MCF 10A (cell line): ENCODE measurements at regions of chr9 and their contacts with region 1.

Region 1: DNA sequence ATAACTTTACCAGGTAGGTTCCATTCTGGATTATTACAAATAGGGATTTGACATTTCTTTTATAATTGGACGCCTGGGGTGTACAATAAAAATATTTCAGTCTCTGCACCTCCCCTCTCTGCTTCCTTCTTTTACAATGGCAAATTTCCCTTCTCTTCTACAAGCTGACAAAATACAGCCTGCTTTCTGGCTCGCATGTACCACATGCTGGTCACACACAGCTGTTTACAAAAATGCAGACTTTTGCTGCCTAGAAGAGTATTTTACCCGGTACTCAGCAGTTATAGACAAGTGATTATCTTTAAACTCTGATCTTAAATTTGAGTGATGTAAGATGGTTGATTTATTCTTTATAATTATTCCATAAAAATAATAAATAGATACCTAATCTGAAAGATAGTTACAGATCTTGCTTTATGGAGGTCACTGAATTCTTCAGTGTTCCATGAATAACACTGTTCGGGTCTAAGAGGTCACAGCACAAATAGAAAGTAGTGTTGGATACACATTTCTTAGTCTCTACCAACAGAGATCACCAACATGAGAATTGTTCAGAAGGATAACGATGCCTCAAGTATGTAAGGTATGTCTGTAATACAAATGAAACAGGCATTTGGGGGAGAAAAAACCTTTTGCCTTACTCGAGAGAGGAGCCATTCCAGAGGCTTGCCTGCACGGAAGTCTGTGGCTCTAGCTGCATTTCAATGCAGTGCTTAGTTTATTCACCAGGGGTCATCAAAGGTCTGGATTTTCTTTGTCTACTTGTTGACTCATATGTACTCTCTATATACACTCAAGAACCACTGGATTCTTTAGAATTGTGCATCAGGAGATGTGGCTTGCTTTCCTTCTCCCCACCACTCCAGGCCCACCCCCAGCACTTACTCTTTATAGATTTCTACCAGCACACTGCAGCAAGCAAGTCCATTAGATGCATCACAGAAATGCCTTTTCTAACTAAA is 206.6 kb upstream of the RFX3 start:
- DNase-seq: peak; percentile 84
- H3K4me3 Mint-ChIP-seq: no peak overlapping the region
- H3K27ac Mint-ChIP-seq: no peak overlapping the region
- H3K4me1 Mint-ChIP-seq: peaks cover 10% of the 10 kb centered on the region
- H3K27me3 Mint-ChIP-seq: no peaks in the 10 kb centered on the region
- CTCF ChIP-seq: peak; percentile 64

Region 2: DNA sequence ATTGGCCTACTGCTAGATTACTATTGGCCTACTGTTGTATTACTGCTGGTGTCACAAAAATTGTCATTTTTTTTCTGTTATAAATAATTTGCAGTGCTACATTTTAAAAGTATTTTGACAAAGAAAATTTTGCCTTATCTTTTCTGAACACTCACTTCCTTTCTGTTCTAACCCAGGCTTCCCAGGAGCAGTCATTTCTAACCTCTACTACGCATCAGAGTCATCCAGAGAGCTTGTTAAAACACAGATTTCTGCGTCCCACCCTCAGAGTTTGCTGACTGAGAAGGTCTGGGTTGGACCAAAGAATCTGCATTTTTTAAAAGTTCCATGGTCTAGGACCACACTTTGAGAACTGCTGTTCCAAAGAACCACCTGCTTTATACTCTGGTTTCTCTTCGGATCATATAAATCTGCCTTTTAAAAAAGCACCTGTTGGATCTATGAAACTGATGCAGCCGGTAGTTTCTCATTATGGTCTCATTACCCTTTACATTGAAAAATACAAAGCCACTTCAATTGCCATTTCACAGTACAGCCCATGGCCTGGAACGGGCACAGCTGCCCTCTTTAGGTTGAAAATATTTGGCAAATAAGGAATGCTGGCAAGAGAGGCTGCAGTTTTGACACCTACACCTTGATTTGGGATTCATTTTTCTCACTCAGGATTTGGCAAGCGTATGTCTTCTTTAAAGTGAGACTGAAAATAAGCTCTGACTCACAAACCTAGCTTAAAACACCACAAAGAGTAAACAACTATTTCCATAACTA is 261.6 kb after region 1 on chr9:
- CTCF ChIA-PET with region 1: no interaction called
- POLR2A ChIA-PET with region 1: no interaction called
- intact Hi-C with region 1: loop called (anchors 2 kb)
- DNase-seq: peak; percentile 13
- H3K4me3 Mint-ChIP-seq: no peak overlapping the region
- H3K27ac Mint-ChIP-seq: no peak overlapping the region
- H3K4me1 Mint-ChIP-seq: no peaks in the 10 kb centered on the region
- H3K27me3 Mint-ChIP-seq: no peaks in the 10 kb centered on the region
- CTCF ChIP-seq: no peak

Region 3: DNA sequence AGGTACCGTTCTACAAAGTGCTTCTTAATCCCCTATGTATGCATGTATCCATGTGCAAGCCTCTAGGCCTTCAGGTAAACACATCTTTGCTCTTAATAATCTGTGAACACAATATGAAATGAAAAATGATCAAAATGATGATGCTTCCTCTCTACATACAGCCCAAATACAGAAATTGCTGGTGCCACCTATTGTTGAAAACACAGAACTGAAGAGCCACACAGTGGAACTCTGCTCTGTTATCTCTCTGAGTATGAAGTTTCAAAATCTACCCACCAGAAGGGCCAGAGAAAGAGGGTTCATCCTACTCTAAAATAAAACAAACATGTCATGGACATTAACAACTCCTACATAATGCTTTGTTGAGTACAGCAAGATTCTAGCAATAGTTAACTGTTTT is 496.2 kb after region 1 on chr9:
- CTCF ChIA-PET with region 1: interaction called, 75 read pairs
- POLR2A ChIA-PET with region 1: no interaction called
- intact Hi-C with region 1: loop called (anchors 1 kb)
- DNase-seq: peak; percentile 48
- H3K4me3 Mint-ChIP-seq: no peak overlapping the region
- H3K27ac Mint-ChIP-seq: peak overlapping the region; percentile 76
- H3K4me1 Mint-ChIP-seq: no peaks in the 10 kb centered on the region
- H3K27me3 Mint-ChIP-seq: no peaks in the 10 kb centered on the region
- CTCF ChIP-seq: peak; percentile 62

Region 4: DNA sequence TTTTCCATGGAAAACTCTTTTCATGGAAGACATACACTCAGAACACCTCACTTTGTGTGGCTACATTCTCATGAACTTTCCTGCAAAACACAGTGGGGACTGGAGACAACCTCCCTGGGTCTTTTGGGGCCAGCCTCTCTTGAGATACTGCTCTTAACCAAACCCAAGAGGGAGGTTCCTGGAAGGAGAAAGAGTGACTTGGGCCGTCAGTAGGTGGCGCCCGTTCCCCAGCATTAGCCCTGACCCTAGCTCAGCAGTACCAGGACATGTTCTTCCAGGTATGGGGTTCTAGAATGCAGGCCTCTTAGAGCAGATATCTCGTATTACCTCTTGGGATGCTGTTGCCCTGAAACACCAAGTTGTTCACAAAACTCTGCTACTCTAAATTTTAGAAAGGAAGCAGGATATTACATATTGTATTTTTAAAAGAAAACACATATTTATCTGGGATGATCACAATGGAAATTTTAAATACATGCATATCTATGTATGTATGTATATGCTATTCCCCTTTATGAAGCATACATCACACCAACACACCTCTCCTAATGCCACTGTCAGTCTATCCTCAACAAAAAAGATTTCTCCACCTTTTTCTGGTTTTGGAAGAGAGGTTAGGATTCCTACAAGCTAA is 583.3 kb after region 1 on chr9:
- CTCF ChIA-PET with region 1: interaction called, 27 read pairs
- POLR2A ChIA-PET with region 1: interaction called, 4 read pairs
- intact Hi-C with region 1: loop called (anchors 1 kb)
- DNase-seq: peak; percentile 79
- H3K4me3 Mint-ChIP-seq: no peak overlapping the region
- H3K27ac Mint-ChIP-seq: no peak overlapping the region
- H3K4me1 Mint-ChIP-seq: no peaks in the 10 kb centered on the region
- H3K27me3 Mint-ChIP-seq: no peaks in the 10 kb centered on the region
- CTCF ChIP-seq: peak; percentile 81

Region 5: DNA sequence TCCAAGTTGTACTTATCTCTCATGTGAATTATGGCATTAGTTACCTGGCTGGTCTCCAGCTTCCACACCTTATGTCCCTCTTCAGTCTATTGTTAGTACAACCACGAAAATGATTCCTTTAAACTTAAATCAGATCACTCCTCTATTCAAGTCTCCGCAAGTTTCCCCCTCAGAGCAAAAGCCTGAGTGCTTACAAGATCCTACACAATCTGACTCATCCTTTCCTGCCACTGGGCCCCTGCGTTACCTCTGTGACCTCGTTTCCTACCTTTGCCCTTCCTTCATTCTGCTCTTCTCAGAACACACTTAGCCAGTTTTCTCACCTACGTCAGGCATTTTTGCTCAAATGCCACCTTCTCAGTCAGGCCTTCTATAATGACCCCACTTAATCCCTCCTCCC is 612.6 kb after region 1 on chr9:
- CTCF ChIA-PET with region 1: interaction called, 40 read pairs
- POLR2A ChIA-PET with region 1: interaction called, 7 read pairs
- intact Hi-C with region 1: no loop called
- DNase-seq: peak; percentile 78
- H3K4me3 Mint-ChIP-seq: no peak overlapping the region
- H3K27ac Mint-ChIP-seq: peak overlapping the region; percentile 3
- H3K4me1 Mint-ChIP-seq: peaks cover 11% of the 10 kb centered on the region
- H3K27me3 Mint-ChIP-seq: no peaks in the 10 kb centered on the region
- CTCF ChIP-seq: no peak

Region 6: DNA sequence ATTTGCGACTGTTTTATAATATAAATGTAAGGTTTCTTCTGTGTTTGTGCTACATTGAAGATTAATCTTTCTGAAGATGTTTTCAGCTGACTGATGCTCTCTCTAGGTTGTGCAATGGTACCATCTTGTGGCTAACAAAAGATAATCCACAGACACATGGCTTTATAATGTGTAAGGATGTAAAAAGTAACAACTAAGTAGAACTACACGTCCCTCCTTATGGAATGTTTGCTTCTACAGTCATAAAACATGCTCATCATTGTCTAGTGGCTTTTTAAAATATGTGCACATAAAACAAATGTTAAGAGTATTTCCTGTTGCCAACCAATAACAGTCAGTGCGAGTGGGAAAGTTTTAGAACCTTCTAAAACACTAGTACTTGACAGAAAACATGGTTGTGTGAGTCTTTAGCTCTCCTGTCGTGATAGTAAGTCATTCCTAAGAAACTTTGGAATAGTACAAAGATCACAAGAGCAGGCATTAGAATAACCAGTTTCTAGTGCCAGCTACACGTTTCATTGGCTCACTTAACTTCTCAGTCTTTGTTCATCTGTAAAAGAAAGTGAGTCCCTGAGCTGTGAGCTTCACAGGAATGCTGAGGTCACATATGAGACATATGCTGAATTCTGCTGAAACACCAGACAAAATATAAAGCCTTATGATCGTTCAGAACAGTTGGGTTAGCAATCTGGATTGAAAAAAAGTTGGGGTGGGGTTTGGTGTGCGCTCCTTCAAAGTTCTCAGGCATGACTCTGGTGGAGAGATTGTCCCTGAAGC is 643.3 kb after region 1 on chr9:
- CTCF ChIA-PET with region 1: interaction called, 9 read pairs
- POLR2A ChIA-PET with region 1: no interaction called
- intact Hi-C with region 1: loop called (anchors 1 kb)
- DNase-seq: peak; percentile 50
- H3K4me3 Mint-ChIP-seq: no peak overlapping the region
- H3K27ac Mint-ChIP-seq: no peak overlapping the region
- H3K4me1 Mint-ChIP-seq: peaks cover 11% of the 10 kb centered on the region
- H3K27me3 Mint-ChIP-seq: peaks cover 24% of the 10 kb centered on the region
- CTCF ChIP-seq: peak; percentile 54